ENCODE measurements at regions of chr17 and their contacts with region 1.

Region 1: DNA sequence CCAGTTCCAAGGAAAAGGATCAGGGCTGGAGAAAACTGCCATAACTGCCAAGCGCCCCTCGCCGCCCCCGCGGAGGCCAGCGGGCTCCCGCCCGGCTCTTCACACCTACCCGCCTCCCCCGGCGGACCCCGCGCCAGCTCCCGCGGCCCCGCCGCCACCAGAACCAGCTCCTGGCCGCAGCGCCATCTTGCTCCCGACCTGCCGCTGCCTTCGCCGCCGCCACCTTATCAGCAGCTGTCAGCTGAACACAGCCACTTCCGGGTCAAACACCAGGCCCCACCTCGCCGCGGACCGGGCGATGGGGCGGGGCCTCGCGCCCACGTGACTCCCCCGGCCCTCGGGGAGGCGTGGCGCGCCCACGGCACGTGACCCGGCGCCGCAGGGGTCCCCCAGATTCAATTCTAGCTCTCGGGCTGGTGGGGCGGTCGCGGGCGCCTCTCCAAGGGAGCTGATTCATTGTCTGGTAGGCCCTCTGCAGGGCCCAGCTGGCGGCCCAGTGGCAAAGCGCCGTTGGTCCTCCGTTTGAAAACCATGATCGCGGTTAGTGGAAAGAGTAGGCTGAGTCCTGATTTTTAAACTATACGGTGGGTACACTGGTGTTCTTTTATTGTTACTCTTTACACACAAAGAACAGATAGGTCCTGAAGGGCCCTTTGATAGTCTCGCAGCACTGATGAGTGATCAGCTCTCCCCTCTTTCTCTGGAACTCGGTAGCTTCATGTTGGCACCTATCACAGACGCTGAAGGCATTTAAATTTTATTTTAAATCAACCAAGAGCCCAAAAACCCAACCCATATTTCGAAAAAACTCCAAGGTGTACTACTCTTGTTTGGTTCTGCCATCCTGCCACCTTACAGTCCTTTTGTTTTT is at the start of gene SYNRG:
- DNase-seq: peak; percentile 81
- ATAC-seq: peak; percentile 93
- H3K4me3 ChIP-seq: peak within 1 kb of the TSS; percentile 78
- H3K27ac ChIP-seq: peak within 1 kb of the TSS; percentile 89
- H3K4me1 ChIP-seq: peaks cover 8% of the 10 kb centered on the region; the same call in 1 of the 2 replicates
- H3K27me3 ChIP-seq: no peaks in the 10 kb centered on the region
- CTCF ChIP-seq: peak; percentile 42 to 49 (median 47); a peak in 4 of 6 replicates
- EP300 ChIP-seq: 0 out of 4 replicates have a peak, but pooled peaks of 1 of the 2 experiments have one; percentile 9
- POLR2A ChIP-seq: peak; percentile 97
- RAD21 ChIP-seq: peak; percentile 23; the same call in 1 of the 2 replicates
- polyA plus RNA-seq, gene SYNRG: 5.2 to 5.8 TPM

Region 2: GRCh38 chr17:37489197-37490001 is 120.0 kb before region 1 on chr17 and contains the start of gene DUSP14:
- CTCF ChIA-PET with region 1: interaction called, 3 read pairs
- POLR2A ChIA-PET with region 1: interaction called, 7 read pairs
- RAD21 ChIA-PET with region 1: interaction called, 10 read pairs
- SMC1A ChIA-PET with region 1: interaction called, 4 read pairs
- in situ Hi-C with region 1: no loop called
- intact Hi-C with region 1: loop called (anchors 2 kb)
- DNase-seq: no peak
- ATAC-seq: peak; percentile 76
- H3K4me3 ChIP-seq: peak within 1 kb of the TSS; percentile 92
- H3K27ac ChIP-seq: peak within 1 kb of the TSS; percentile 53
- H3K4me1 ChIP-seq: peaks cover 17% of the 10 kb centered on the region
- H3K27me3 ChIP-seq: no peaks in the 10 kb centered on the region
- CTCF ChIP-seq: peak in 1 of 3 experiments; percentile 13; a peak in 1 of 6 replicates
- EP300 ChIP-seq: no peak
- POLR2A ChIP-seq: peak; percentile 88
- RAD21 ChIP-seq: no peak
- polyA plus RNA-seq, gene DUSP14: 21.1 to 36.5 TPM

Region 3: DNA sequence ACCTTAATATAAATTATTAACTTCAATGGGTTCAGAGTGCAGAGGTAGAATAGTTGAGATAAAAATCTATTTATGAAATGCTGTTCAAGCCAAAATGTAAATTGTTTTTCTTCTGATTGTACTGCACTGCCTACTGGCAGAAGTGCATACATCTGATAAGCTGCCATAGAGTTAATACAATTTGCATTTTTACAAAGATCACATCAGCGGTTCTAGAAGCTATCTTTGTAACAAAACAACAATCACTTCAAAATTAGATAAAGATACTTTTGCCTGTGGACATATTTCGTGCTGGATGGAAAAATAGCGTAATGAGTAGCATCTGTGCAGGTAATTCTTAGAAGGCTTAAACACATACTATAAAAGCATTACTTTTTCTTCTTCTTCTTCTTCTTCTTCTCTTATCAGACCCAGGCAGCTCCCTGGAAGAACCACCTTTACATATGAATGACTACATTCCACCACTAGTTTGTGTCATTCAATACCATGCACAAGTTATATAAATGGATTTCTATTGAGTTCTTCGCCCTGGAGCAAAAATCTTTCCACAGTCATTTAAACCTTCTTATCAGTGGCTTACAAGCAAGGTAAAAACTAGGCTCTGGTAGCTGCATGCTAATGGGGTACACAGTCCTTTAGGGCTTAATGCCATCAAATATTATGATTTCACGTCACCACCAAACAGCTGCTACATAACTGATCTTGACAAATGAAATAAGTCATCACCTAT is 47.2 kb before region 1 on chr17:
- CTCF ChIA-PET with region 1: no interaction called
- POLR2A ChIA-PET with region 1: no interaction called
- RAD21 ChIA-PET with region 1: no interaction called
- SMC1A ChIA-PET with region 1: interaction called, 3 read pairs
- in situ Hi-C with region 1: loop called (anchors 5 kb)
- intact Hi-C with region 1: no loop called
- DNase-seq: no peak
- ATAC-seq: no peak
- H3K4me3 ChIP-seq: no peak overlapping the region
- H3K27ac ChIP-seq: no peak overlapping the region
- H3K4me1 ChIP-seq: no peaks in the 10 kb centered on the region
- H3K27me3 ChIP-seq: no peaks in the 10 kb centered on the region
- CTCF ChIP-seq: no peak
- EP300 ChIP-seq: no peak
- POLR2A ChIP-seq: no peak
- RAD21 ChIP-seq: no peak

Region 4: GRCh38 chr17:37592291-37592690 is 17.1 kb before region 1 on chr17:
- CTCF ChIA-PET with region 1: interaction called, 3 read pairs
- POLR2A ChIA-PET with region 1: interaction called, 9 read pairs
- RAD21 ChIA-PET with region 1: no interaction called
- SMC1A ChIA-PET with region 1: interaction called, 12 read pairs
- in situ Hi-C with region 1: no loop called
- intact Hi-C with region 1: no loop called
- DNase-seq: no peak
- ATAC-seq: no peak
- H3K4me3 ChIP-seq: no peak overlapping the region
- H3K27ac ChIP-seq: no peak overlapping the region
- H3K4me1 ChIP-seq: no peaks in the 10 kb centered on the region
- H3K27me3 ChIP-seq: no peaks in the 10 kb centered on the region
- CTCF ChIP-seq: no peak
- EP300 ChIP-seq: no peak
- POLR2A ChIP-seq: no peak
- RAD21 ChIP-seq: no peak

Region 5: DNA sequence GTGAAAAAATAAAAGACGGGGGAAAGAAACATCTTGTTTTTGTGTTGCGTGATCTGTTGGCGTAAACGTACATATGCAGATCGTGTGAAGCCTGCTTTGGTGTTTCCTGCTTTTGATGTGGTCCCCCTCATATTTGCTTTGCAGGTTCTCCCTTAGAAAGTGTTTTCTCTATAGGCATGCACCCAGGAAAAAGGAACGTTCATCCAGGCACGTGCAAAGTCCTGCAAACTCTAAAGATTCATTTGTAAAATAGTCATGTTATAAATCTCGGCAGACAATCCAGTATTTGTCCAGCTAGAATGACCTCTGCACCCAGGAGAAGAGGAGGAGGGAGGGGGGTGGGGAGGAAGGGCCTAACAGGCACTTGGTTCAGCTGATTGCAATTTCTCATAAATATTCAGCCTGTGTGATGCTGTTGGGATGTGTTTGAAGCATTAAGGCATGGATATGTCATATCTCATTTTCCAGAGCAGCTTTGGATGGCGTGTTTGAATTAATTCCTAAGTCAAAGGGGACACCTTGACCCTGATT is 74.1 kb after region 1 on chr17:
- CTCF ChIA-PET with region 1: no interaction called
- POLR2A ChIA-PET with region 1: no interaction called
- RAD21 ChIA-PET with region 1: no interaction called
- SMC1A ChIA-PET with region 1: no interaction called
- in situ Hi-C with region 1: no loop called
- intact Hi-C with region 1: no loop called
- DNase-seq: no peak
- ATAC-seq: no peak
- H3K4me3 ChIP-seq: no peak overlapping the region
- H3K27ac ChIP-seq: no peak overlapping the region
- H3K4me1 ChIP-seq: no peaks in the 10 kb centered on the region
- H3K27me3 ChIP-seq: no peaks in the 10 kb centered on the region; a peak in 1 of 4 replicates
- CTCF ChIP-seq: no peak
- EP300 ChIP-seq: no peak
- POLR2A ChIP-seq: no peak
- RAD21 ChIP-seq: no peak

Region 6: DNA sequence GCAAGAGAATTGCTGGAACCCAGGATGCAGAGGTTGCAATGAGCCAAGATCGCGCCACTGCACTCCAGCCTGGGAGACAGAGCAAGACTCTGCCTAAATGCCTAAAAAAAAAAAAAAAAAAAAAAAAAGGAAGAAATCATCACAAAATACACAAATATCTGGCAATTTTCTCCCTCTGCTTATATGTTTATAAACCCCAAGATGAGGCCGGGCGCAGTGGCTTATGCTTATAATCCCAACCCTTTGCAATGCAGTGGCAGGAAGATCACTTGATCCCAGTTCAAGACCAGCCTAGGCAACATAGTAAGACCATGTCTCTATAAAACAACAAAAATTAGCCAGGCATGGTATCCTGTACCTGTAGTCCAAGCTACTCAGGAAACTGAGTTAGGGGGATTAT is 1820.2 kb after region 1 on chr17:
- CTCF ChIA-PET with region 1: no interaction called
- POLR2A ChIA-PET with region 1: no interaction called
- RAD21 ChIA-PET with region 1: no interaction called
- SMC1A ChIA-PET with region 1: no interaction called
- in situ Hi-C with region 1: loop called (anchors 25 kb)
- intact Hi-C with region 1: no loop called
- DNase-seq: no peak
- ATAC-seq: no peak
- H3K4me3 ChIP-seq: no peak overlapping the region
- H3K27ac ChIP-seq: no peak overlapping the region
- H3K4me1 ChIP-seq: no peaks in the 10 kb centered on the region
- H3K27me3 ChIP-seq: no peaks in the 10 kb centered on the region
- CTCF ChIP-seq: no peak
- EP300 ChIP-seq: no peak
- POLR2A ChIP-seq: no peak
- RAD21 ChIP-seq: no peak

Measured in GM12878 (cell line).